Activated CD8-positive, alpha-beta memory T cell treated with anti-CD3 and anti-CD28 coated beads, Interleukin-2, amount 10 ng/mL, durations not matched to agents 7 days and 5 days (primary cell): ENCODE measurements at regions of chr17 and their contacts with region 1.

Region 1: GRCh38 chr17:41930009-41930832 is at the start of gene ODAD4:
- DNase-seq: peak; percentile 98
- ATAC-seq: peak; percentile 99
- H3K4me3 Mint-ChIP-seq: peak within 1 kb of the TSS; percentile 96
- H3K27ac Mint-ChIP-seq: peak within 1 kb of the TSS; percentile 95
- H3K4me1 Mint-ChIP-seq: peaks cover 62% of the 10 kb centered on the region
- H3K27me3 Mint-ChIP-seq: no peaks in the 10 kb centered on the region
- total RNA-seq, gene ODAD4: 0.49 to 1.1 TPM

Region 2: GRCh38 chr17:41918314-41919164 is 11.7 kb before region 1 on chr17 and contains the start of gene ACLY:
- CTCF ChIA-PET with region 1: interaction called, 36 read pairs
- DNase-seq: peak; percentile 98
- ATAC-seq: peak; percentile 96
- H3K4me3 Mint-ChIP-seq: peak within 1 kb of the TSS; percentile 91
- H3K27ac Mint-ChIP-seq: peak within 1 kb of the TSS; percentile 89
- H3K4me1 Mint-ChIP-seq: peaks cover 40% of the 10 kb centered on the region
- H3K27me3 Mint-ChIP-seq: no peaks in the 10 kb centered on the region
- total RNA-seq, gene ACLY: 186 to 220 TPM

Region 3: GRCh38 chr17:42072323-42073187 is 142.3 kb after region 1 on chr17:
- CTCF ChIA-PET with region 1: no interaction called
- DNase-seq: no peak
- ATAC-seq: peak; percentile 34
- H3K4me3 Mint-ChIP-seq: peak overlapping the region; percentile 58
- H3K27ac Mint-ChIP-seq: no peak overlapping the region
- H3K4me1 Mint-ChIP-seq: peaks cover 9% of the 10 kb centered on the region
- H3K27me3 Mint-ChIP-seq: peaks cover 27% of the 10 kb centered on the region